Aorta (tissue), 5 donors: ENCODE measurements at regions of chr20 and their contacts with region 1.

Region 1: GRCh38 chr20:44683263-44684046 is 31.7 kb upstream of the CCN5 start:
- DNase-seq: no peak
- ATAC-seq: no peak
- H3K4me3 ChIP-seq: no peak overlapping the region
- H3K27ac ChIP-seq: no peak overlapping the region
- H3K4me1 ChIP-seq: no peaks in the 10 kb centered on the region
- H3K27me3 ChIP-seq: no peaks in the 10 kb centered on the region

Region 2: GRCh38 chr20:44566013-44566412 is 117.4 kb before region 1 on chr20:
- intact Hi-C with region 1: no loop called
- DNase-seq: no peak
- ATAC-seq: no peak
- H3K4me3 ChIP-seq: no peak overlapping the region
- H3K27ac ChIP-seq: no peak overlapping the region
- H3K4me1 ChIP-seq: no peaks in the 10 kb centered on the region
- H3K27me3 ChIP-seq: no peaks in the 10 kb centered on the region

Region 3: DNA sequence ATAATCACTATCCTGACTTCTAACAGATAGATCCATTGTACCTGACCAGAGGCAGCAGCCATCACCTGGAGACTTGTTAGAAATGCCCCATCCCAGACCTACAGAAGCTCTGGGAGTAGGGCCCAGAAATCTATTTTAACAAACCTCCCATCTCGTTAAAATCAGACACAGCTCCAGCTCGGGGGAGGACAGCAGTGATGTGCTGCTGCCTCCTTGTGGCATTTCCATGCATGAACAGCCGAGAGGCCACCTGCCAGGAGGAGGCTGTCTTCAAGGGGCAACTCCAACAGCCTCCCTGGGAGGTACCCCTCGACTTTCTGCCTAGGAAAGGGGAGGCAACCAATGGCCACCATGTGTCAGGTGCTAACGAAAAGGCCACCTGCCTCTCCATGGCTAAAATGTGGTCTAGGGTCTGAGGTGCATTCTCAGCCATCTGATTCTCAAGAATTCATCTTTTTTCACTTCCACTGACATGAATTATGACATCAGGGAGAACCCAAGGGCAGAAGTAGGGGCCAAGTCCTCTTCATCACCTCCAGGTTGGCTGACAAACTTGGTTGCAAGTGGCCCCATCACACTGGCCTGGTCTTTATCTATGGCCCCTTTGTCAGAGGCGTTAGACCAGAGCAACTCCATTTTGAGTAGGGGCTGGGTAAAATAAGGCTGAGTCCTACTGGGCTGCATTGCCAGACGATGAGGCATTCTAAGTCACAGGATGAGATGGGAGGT is 50.0 kb after region 1 on chr20:
- intact Hi-C with region 1: loop called (anchors 1 kb)
- DNase-seq: peak; percentile 77 to 87
- ATAC-seq: peak; percentile 78
- H3K4me3 ChIP-seq: no peak overlapping the region
- H3K27ac ChIP-seq: peak overlapping the region in 1 of 2 donors; percentile 91
- H3K4me1 ChIP-seq: peaks cover 0 to 4% of the 10 kb centered on the region in 2 donors
- H3K27me3 ChIP-seq: no peaks in the 10 kb centered on the region

Region 4: DNA sequence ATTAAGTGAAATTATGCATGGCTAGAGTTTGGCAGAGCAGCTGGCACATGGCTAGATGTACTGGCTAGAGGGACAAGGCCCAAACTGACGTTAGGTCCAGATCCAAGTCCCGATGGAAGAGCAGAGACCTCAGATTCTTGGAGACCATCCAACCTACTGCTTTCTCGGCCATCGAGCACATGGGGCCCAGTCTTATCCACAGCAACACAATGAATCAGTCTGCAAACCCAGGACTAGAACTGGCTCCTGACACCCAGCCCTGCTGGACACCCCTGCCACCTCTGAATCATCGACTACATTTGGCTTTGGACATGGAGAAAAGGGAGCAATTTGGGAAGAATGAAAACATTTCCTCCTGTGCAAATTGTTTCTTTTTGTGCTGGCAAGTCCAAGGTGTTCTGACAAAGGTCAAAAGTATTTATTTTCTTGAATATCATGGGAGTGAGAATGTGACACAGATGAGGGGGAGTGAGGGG is 178.1 kb after region 1 on chr20:
- intact Hi-C with region 1: loop called (anchors 5 kb)
- DNase-seq: peak; percentile 83 to 86
- ATAC-seq: peak; percentile 91
- H3K4me3 ChIP-seq: no peak overlapping the region
- H3K27ac ChIP-seq: peak overlapping the region in 1 of 2 donors; percentile 39
- H3K4me1 ChIP-seq: peaks cover 5 to 11% of the 10 kb centered on the region in 2 donors
- H3K27me3 ChIP-seq: no peaks in the 10 kb centered on the region